GM12878 (cell line): ENCODE measurements at regions of chr22 and their contacts with region 1.

Region 1: DNA sequence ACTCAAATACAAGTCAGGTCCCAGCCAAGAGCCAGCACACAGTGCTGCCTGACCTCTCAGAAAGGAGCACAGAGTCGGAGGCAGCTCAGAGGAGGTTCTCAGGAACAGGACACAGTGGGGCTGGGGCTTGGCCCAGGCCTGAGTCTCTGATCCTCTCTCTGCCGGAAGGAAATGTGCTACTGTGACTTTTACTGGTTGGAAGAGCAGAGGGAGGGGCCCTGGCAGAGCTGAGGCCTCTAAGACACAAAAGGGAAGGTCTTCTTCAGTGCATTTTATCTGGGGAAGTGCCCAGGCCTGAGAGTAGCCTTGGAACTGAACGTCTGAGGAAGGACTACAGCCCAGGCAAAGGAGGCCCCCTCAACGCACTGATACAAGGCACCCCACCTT is 16.2 kb upstream of the CASTOR1 start:
- DNase-seq: peak; percentile 59
- ATAC-seq: peak; percentile 63
- H3K4me3 ChIP-seq: peak overlapping the region; percentile 51
- H3K27ac ChIP-seq: peak overlapping the region; percentile 96
- H3K4me1 ChIP-seq: peaks cover 85% of the 10 kb centered on the region
- H3K27me3 ChIP-seq: no peaks in the 10 kb centered on the region
- CTCF ChIP-seq: no peak
- EP300 ChIP-seq: no peak
- POLR2A ChIP-seq: peak; percentile 74
- RAD21 ChIP-seq: no peak

Region 2: DNA sequence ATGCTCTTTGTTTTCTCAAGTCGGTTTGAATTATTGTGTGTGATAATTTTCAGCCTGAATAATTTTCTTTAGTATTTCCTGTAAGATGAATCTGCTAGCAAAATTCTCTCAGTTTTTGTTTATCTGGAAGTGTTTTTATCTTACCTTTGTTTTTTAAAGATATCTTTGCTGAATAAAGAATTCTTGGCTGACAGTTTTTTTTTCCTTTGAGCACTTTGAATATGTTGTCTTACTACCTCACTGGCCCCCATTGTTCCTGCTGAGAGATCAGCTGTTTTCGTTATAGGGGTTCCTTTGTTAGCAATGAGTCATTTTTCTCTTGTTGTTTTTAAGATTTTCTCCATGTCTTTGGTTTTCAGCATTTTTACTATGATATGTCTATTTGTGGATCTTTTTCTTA is 162.2 kb before region 1 on chr22:
- CTCF ChIA-PET with region 1: no interaction called
- POLR2A ChIA-PET with region 1: no interaction called
- RAD21 ChIA-PET with region 1: no interaction called
- SMC1A ChIA-PET with region 1: no interaction called
- in situ Hi-C with region 1: no loop called
- intact Hi-C with region 1: no loop called
- DNase-seq: no peak
- ATAC-seq: no peak
- H3K4me3 ChIP-seq: no peak overlapping the region
- H3K27ac ChIP-seq: no peak overlapping the region
- H3K4me1 ChIP-seq: no peaks in the 10 kb centered on the region
- H3K27me3 ChIP-seq: peaks cover 0 to 3% of the 10 kb centered on the region in 2 experiments; a peak in 1 of 4 replicates
- CTCF ChIP-seq: no peak
- EP300 ChIP-seq: no peak
- POLR2A ChIP-seq: no peak
- RAD21 ChIP-seq: no peak

Region 3: GRCh38 chr22:30356449-30357235 is 51.1 kb after region 1 on chr22 and contains the starts of genes CCDC157 and SF3A1:
- CTCF ChIA-PET with region 1: interaction called, 3 read pairs
- POLR2A ChIA-PET with region 1: interaction called, 5 read pairs
- RAD21 ChIA-PET with region 1: interaction called, 14 read pairs
- SMC1A ChIA-PET with region 1: interaction called, 10 read pairs
- in situ Hi-C with region 1: no loop called
- intact Hi-C with region 1: no loop called
- DNase-seq: peak; percentile 56
- ATAC-seq: peak; percentile 96
- H3K4me3 ChIP-seq: peak within 1 kb of the TSS; percentile 92
- H3K27ac ChIP-seq: peak within 1 kb of the TSS; percentile 92
- H3K4me1 ChIP-seq: 0 out of 2 replicates have a peak, but pooled peaks cover 5% of the 10 kb centered on the region
- H3K27me3 ChIP-seq: no peaks in the 10 kb centered on the region
- CTCF ChIP-seq: no peak
- EP300 ChIP-seq: 0 out of 4 replicates have a peak, but pooled peaks of 1 of the 2 experiments have one; percentile 20
- POLR2A ChIP-seq: peak; percentile 100
- RAD21 ChIP-seq: no peak
- polyA plus RNA-seq, gene CCDC157: 0.10 to 0.46 TPM
- polyA plus RNA-seq, gene SF3A1: 10.4 to 13.4 TPM

Region 4: DNA sequence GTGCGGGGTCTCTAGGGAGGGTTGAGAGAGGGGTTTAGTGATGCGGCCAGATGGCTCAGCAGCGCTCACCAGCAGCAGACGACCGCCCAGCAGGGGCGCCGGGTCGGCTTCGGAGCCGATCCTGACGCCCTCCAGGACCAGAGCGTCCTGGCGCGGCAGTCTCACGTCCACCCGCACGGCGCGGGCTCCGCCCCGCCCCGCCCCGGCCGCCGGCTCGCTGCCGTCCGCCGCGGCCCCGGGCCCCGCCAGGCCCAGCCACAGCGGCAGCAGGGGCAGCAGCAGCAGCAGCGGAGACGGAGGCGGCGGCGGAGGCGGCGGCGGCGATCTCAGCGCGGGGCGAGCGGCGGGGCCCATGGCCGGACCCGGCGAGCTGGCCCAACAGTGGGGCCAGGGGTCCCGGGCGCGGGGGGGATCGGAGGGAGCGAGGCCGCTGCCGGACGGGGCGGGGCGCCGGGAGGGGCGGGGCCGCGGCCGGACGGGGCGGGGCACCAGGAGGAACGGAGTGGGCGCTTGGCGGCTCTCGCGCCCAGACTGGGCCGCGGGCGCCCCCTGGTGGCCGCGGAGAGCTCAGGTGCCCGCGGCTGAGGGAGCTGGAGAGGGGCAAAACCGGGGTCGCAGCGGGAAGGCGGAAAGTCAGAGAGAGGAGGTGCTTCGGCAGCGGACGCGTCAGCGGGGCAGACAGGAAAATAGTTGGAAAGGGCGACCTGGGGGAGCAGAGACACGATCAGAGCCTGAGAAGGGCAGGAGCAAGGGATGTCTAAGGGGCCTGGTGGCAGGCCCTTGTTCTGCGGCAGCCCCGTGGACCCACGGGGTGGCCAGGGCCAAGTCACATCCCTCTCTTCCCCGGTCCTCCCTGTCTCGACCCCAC is 81.7 kb after region 1 on chr22 and contains the start of gene RNF215:
- CTCF ChIA-PET with region 1: interaction called, 4 read pairs
- POLR2A ChIA-PET with region 1: interaction called, 11 read pairs
- RAD21 ChIA-PET with region 1: interaction called, 7 read pairs
- SMC1A ChIA-PET with region 1: interaction called, 4 read pairs
- in situ Hi-C with region 1: no loop called
- intact Hi-C with region 1: no loop called
- DNase-seq: no peak
- ATAC-seq: peak; percentile 88
- H3K4me3 ChIP-seq: peak within 1 kb of the TSS; percentile 77; the same call in 1 of the 2 replicates
- H3K27ac ChIP-seq: no peak within 1 kb of the TSS; the same call in 1 of the 2 replicates
- H3K4me1 ChIP-seq: peaks cover 15% of the 10 kb centered on the region
- H3K27me3 ChIP-seq: no peaks in the 10 kb centered on the region
- CTCF ChIP-seq: peak; percentile 76 to 86 (median 83)
- EP300 ChIP-seq: no peak
- POLR2A ChIP-seq: no peak; the same call in 1 of the 2 replicates
- RAD21 ChIP-seq: peak; percentile 85
- polyA plus RNA-seq, gene RNF215: 0.31 TPM in 1 of 2 experiments, not detected in the other